Head of caudate nucleus (tissue), 42 donors: ENCODE measurements at regions of chr4 and their contacts with region 1.

Region 1: GRCh38 chr4:185395956-185396723 is 416 bp upstream of the LRP2BP start:
- DNase-seq: peak; percentile 93 to 99 (median 98)

Region 2: DNA sequence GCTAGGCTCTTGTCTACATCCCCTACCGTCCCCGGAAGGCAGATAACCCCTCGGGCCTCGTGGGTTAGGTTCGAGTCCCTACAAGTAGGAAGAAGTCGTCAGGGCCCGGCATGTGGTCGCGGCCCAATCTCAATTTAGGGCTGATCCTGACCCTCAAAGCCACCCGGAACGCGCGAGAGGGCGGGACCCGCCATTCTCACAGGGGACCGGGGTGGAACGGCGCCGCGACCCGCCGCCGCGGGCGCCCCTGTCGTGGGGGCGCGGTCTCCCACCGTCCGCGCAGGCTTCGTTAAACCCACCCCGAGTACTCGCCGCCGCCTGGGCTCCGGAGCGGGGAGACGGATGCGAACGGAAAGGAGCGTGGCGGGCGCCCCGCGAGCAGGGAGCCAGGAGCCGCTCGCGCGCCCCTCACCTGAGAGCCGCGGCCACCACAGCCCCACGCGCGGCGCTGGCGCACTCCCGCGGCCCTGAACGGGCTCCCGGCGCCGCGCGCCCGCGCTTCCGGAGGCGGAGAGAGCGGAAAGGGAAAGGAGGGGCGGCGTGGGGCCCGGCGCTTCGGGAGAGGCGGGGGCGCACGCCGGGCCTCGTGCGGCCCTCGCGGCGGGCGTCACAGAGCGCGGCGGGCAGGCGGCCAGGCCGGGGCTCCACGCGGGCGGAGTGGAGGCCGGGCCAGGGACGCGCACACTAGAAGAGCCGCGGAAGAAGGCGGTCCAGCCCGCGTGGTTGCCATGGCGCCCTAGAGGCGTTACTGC is 192.5 kb before region 1 on chr4 and contains the start of gene CFAP97:
- intact Hi-C with region 1: loop called (anchors 5 kb)
- DNase-seq: peak; percentile 67 to 96 (median 89)

Region 3: GRCh38 chr4:185254434-185254833 is 141.7 kb before region 1 on chr4:
- intact Hi-C with region 1: no loop called
- DNase-seq: no peak